Activated CD8-positive, alpha-beta memory T cell treated with anti-CD3 and anti-CD28 coated beads, Interleukin-2, amount 10 ng/mL, durations not matched to agents 7 days and 5 days (primary cell): ENCODE measurements at regions of chr1 and their contacts with region 1.

Region 1: DNA sequence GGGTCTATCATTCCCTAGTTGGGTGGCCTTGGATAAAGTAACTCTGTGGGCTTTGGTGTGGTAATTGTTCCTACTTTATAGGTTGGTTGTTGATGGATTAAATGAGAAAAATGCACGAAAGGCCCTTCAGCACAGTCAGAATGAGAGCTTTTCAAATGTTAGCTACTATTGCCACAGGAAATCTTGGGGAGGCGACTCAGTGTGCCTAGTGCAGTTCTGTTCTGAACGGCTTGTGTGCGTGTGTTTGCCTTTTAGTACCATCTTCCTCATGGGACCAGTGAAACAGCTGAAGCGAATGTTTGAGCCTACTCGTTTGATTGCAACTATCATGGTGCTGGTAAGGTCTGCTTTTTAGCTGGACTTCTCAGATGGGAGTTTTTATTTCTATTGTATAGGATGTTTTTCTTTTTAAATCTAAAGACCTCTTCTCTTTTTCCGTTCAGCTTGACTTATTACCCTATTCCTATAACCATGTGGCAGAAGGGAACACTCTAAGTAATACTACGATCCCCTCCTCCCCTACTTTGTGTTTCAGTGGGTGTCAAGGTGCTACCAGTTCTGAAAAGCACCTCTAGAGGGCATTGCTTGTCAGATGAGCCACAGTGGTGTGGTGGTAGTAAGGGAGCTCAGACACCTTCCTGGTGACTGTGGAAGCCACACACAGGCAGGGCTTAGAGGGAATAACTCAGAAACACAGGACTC is 9.2 kb downstream of the SFT2D2 start:
- DNase-seq: peak; percentile 73
- ATAC-seq: peak; percentile 86
- H3K4me3 Mint-ChIP-seq: no peak overlapping the region
- H3K27ac Mint-ChIP-seq: peak overlapping the region; percentile 77
- H3K4me1 Mint-ChIP-seq: peaks cover 52% of the 10 kb centered on the region
- H3K27me3 Mint-ChIP-seq: no peaks in the 10 kb centered on the region

Region 2: GRCh38 chr1:168004531-168004930 is 230.5 kb before region 1 on chr1:
- CTCF ChIA-PET with region 1: no interaction called
- DNase-seq: no peak
- ATAC-seq: no peak
- H3K4me3 Mint-ChIP-seq: no peak overlapping the region
- H3K27ac Mint-ChIP-seq: no peak overlapping the region
- H3K4me1 Mint-ChIP-seq: peaks cover 2% of the 10 kb centered on the region
- H3K27me3 Mint-ChIP-seq: no peaks in the 10 kb centered on the region

Region 3: GRCh38 chr1:168151935-168152334 is 83.1 kb before region 1 on chr1:
- CTCF ChIA-PET with region 1: no interaction called
- DNase-seq: no peak
- ATAC-seq: no peak
- H3K4me3 Mint-ChIP-seq: no peak overlapping the region
- H3K27ac Mint-ChIP-seq: no peak overlapping the region
- H3K4me1 Mint-ChIP-seq: peaks cover 5% of the 10 kb centered on the region
- H3K27me3 Mint-ChIP-seq: peaks cover 12% of the 10 kb centered on the region

Region 4: DNA sequence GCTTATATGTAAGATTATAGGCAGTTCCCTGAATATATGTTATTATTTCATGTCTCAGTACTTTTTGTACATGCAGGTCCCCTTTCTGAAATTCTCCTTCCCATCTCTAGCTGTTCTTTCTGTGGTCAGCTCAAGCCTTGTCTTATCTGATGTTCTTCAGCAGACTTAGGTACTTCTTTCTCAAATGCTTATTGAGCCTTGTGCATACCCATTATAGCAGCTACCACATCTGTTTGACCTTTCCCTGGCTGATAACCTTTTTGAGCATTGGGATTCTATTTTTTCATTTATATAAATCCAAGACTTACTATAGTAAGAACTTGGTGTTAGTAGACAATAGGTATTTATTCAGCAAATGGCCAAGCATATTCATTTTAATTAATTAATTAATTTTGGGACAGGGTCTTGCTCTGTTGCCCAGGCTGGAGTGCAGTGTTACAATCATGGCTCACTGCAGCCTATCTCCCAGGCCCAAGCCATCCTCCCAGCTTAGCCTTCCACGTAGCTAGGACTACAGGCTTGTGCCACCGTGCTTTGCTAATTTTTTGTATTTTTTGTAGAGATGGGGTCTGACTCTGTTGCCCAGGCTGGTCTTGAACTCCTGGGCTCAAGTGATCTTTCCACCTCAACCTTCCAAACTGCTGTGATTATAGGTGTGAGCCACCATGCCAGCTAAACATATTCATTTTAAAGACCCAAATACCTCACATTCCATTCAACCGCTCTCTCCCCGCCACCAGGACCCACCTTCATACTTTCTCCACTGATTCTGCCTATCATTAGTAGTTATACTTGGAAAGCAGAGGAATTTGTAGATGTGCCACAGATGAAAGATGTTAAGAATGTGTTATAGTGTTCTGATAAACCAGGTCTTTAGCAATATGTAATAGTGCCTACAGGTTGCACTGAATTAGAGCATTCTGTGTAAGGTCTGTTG is 39.5 kb before region 1 on chr1:
- CTCF ChIA-PET with region 1: no interaction called
- DNase-seq: no peak
- ATAC-seq: no peak
- H3K4me3 Mint-ChIP-seq: no peak overlapping the region
- H3K27ac Mint-ChIP-seq: no peak overlapping the region
- H3K4me1 Mint-ChIP-seq: peaks cover 4% of the 10 kb centered on the region
- H3K27me3 Mint-ChIP-seq: no peaks in the 10 kb centered on the region

Region 5: DNA sequence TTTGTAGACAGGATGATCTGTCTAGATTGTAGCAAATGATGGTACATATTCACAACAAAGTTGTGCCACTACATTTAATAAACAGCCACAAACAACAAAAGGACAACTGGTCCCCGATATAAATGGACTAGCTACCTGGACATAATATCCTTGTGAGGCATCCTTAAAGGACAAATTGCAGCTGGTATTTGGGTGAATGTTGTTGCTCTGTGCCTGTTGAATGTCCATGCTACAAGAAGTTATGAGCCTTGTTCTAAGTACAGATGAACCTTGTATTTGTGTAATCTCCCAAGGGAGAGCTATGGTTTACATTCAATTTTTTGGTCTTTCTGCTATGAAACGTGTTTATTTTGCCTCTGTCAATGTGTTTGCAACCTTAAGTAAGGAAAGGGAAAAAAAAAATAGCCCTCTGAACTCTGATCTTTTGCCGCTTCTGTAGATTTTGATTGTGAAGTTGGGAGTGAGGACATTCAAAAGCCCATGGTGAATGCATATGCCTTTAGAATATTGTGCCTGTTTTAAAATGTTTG is 17.3 kb after region 1 on chr1:
- CTCF ChIA-PET with region 1: interaction called, 11 read pairs
- DNase-seq: no peak
- ATAC-seq: no peak
- H3K4me3 Mint-ChIP-seq: no peak overlapping the region
- H3K27ac Mint-ChIP-seq: no peak overlapping the region
- H3K4me1 Mint-ChIP-seq: peaks cover 14% of the 10 kb centered on the region
- H3K27me3 Mint-ChIP-seq: no peaks in the 10 kb centered on the region

Region 6: DNA sequence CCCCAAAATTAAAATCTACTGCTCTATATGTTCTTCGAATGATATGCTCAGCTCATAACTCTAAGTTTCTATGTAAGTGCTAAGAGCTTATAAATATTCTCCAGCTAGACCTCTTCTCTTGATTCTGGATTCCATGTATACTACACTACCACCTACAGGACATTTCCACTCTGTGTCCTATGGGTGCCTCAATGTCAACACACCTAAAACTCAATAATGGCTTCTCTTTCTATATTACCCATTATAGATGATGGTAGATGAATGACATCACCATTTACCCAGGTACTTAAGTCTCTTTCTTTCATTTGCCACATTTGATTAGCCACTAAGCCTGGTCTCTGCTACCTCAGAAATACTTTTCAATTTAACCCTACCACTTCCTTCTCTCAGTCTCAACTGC is 86.9 kb after region 1 on chr1:
- CTCF ChIA-PET with region 1: interaction called, 22 read pairs
- DNase-seq: no peak
- ATAC-seq: peak; percentile 89
- H3K4me3 Mint-ChIP-seq: no peak overlapping the region
- H3K27ac Mint-ChIP-seq: peak overlapping the region; percentile 42
- H3K4me1 Mint-ChIP-seq: peaks cover 38% of the 10 kb centered on the region
- H3K27me3 Mint-ChIP-seq: no peaks in the 10 kb centered on the region

Region 7: GRCh38 chr1:168360151-168361021 is 125.4 kb after region 1 on chr1:
- CTCF ChIA-PET with region 1: interaction called, 17 read pairs
- DNase-seq: peak; percentile 95
- ATAC-seq: peak; percentile 71
- H3K4me3 Mint-ChIP-seq: peak overlapping the region; percentile 37
- H3K27ac Mint-ChIP-seq: peak overlapping the region; percentile 85
- H3K4me1 Mint-ChIP-seq: peaks cover 55% of the 10 kb centered on the region
- H3K27me3 Mint-ChIP-seq: peaks cover 2% of the 10 kb centered on the region